ENCODE measurements at regions of chr3 and their contacts with region 1.

Region 1: GRCh38 chr3:42012935-42013690 is 51.2 kb upstream of the ULK4 start:
- DNase-seq: peak; percentile 18
- ATAC-seq: peak; percentile 90
- H3K4me3 ChIP-seq: peak overlapping the region; percentile 62 to 65
- H3K27ac ChIP-seq: no peak overlapping the region; the same call in 1 of the 2 replicates
- H3K4me1 ChIP-seq: peaks cover 10 to 23% of the 10 kb centered on the region in 2 experiments; a peak in 3 of 4 replicates
- H3K27me3 ChIP-seq: no peaks in the 10 kb centered on the region
- CTCF ChIP-seq: no peak
- POLR2A ChIP-seq: peak; percentile 25
- RAD21 ChIP-seq: no peak

Region 2: DNA sequence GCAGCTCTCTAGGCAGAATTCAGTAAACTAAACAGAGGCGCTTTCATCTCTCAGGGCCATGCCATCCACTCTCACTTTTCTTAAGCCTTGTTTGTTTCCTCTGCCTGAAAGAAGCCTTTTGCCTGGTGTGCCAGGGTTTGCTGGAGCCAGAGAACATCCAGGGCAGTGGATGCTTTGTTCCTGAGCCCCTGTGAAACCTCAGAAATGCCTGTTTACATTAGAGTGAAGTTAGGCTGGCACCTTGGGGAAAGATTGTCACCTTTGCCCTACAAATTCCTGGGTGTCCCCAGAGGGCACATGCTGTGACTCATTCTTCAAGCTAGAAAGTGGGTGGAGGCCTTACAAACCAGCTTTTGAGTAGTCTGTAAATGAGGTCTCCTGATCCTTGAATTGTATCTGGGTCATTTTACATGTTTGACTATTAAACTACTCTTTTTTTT is 67.4 kb after region 1 on chr3:
- CTCF ChIA-PET with region 1: no interaction called
- POLR2A ChIA-PET with region 1: no interaction called
- RAD21 ChIA-PET with region 1: no interaction called
- intact Hi-C with region 1: loop called (anchors 5 kb)
- DNase-seq: peak; percentile 64
- ATAC-seq: peak; percentile 75
- H3K4me3 ChIP-seq: peak overlapping the region; percentile 5 to 26; a peak in 2 of 4 replicates
- H3K27ac ChIP-seq: peak overlapping the region; percentile 54
- H3K4me1 ChIP-seq: peaks cover 44 to 59% of the 10 kb centered on the region in 2 experiments
- H3K27me3 ChIP-seq: no peaks in the 10 kb centered on the region
- CTCF ChIP-seq: no peak
- POLR2A ChIP-seq: no peak
- RAD21 ChIP-seq: no peak